Activated CD8-positive, alpha-beta T cell treated with anti-CD3 and anti-CD28 coated beads for 36 hours (primary cell): ENCODE measurements at regions of chr5 and their contacts with region 1.

Region 1: DNA sequence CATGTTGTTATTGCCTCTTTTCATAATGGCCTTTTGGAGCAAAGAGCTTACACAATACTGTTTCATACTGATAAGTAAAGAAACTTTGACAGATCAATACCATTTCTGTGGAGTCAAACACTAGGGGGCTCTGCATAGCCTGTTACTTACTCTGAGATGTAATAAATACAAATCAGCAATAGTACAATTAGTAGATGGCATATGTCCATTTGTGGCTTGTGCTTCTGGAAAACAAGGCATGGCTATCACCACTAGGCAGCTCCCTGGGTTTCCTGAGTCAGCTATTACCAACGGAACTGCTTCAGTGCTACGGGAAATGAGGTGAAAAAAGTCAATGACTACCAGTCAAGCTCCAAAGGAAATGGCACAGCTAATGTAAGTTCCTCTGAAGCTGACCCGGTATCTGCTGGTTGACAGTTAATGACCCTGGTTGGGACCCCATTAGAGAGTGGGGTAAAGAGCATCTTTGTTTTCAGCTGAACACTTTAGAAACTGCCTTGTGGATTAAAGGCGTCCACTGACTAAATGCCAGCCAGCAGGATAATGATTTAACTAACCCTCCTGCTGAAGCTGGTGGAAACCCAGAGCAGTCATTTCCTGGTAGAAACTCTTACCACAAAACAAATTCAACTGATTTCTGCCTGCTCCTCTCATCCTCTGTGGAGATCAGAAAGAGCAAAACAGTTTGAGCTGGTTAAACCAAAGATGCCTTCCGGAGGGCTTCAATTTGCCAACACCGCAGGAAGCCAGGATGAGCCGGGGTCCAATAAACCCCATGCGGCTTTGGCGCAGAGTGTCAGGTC is 69.0 kb upstream of the FAM169A start:
- DNase-seq: peak; percentile 45
- ATAC-seq: peak; percentile 87
- H3K4me3 Mint-ChIP-seq: peak overlapping the region; percentile 46
- H3K27ac Mint-ChIP-seq: peak overlapping the region; percentile 83
- H3K4me1 Mint-ChIP-seq: peaks cover 27% of the 10 kb centered on the region
- H3K27me3 Mint-ChIP-seq: peaks cover 4% of the 10 kb centered on the region
- CTCF ChIP-seq: peak; percentile 66

Region 2: GRCh38 chr5:74251141-74252035 is 683.8 kb before region 1 on chr5:
- CTCF ChIA-PET with region 1: no interaction called
- POLR2A ChIA-PET with region 1: no interaction called
- intact Hi-C with region 1: no loop called
- DNase-seq: no peak
- ATAC-seq: no peak
- H3K4me3 Mint-ChIP-seq: no peak overlapping the region
- H3K27ac Mint-ChIP-seq: no peak overlapping the region
- H3K4me1 Mint-ChIP-seq: no peaks in the 10 kb centered on the region
- H3K27me3 Mint-ChIP-seq: peaks cover 11% of the 10 kb centered on the region
- CTCF ChIP-seq: no peak

Region 3: GRCh38 chr5:74945561-74946165 is 10.5 kb after region 1 on chr5:
- CTCF ChIA-PET with region 1: interaction called, 19 read pairs
- POLR2A ChIA-PET with region 1: no interaction called
- intact Hi-C with region 1: no loop called
- DNase-seq: peak; percentile 79
- ATAC-seq: peak; percentile 96
- H3K4me3 Mint-ChIP-seq: no peak overlapping the region
- H3K27ac Mint-ChIP-seq: no peak overlapping the region
- H3K4me1 Mint-ChIP-seq: peaks cover 11% of the 10 kb centered on the region
- H3K27me3 Mint-ChIP-seq: peaks cover 12% of the 10 kb centered on the region
- CTCF ChIP-seq: no peak

Region 4: GRCh38 chr5:74963407-74963806 is 28.3 kb after region 1 on chr5:
- CTCF ChIA-PET with region 1: no interaction called
- POLR2A ChIA-PET with region 1: no interaction called
- intact Hi-C with region 1: no loop called
- DNase-seq: no peak
- ATAC-seq: no peak
- H3K4me3 Mint-ChIP-seq: no peak overlapping the region
- H3K27ac Mint-ChIP-seq: no peak overlapping the region
- H3K4me1 Mint-ChIP-seq: no peaks in the 10 kb centered on the region
- H3K27me3 Mint-ChIP-seq: peaks cover 2% of the 10 kb centered on the region
- CTCF ChIP-seq: no peak